Activated CD8-positive, alpha-beta T cell treated with anti-CD3 and anti-CD28 coated beads for 36 hours (primary cell): ENCODE measurements at regions of chr22 and their contacts with region 1.

Region 1: GRCh38 chr22:39514373-39514973 is 5.9 kb upstream of the ATF4 start:
- DNase-seq: peak; percentile 75
- ATAC-seq: no peak
- H3K4me3 Mint-ChIP-seq: no peak overlapping the region
- H3K27ac Mint-ChIP-seq: peak overlapping the region; percentile 19
- H3K4me1 Mint-ChIP-seq: peaks cover 39% of the 10 kb centered on the region
- H3K27me3 Mint-ChIP-seq: no peaks in the 10 kb centered on the region
- CTCF ChIP-seq: peak; percentile 72

Region 2: DNA sequence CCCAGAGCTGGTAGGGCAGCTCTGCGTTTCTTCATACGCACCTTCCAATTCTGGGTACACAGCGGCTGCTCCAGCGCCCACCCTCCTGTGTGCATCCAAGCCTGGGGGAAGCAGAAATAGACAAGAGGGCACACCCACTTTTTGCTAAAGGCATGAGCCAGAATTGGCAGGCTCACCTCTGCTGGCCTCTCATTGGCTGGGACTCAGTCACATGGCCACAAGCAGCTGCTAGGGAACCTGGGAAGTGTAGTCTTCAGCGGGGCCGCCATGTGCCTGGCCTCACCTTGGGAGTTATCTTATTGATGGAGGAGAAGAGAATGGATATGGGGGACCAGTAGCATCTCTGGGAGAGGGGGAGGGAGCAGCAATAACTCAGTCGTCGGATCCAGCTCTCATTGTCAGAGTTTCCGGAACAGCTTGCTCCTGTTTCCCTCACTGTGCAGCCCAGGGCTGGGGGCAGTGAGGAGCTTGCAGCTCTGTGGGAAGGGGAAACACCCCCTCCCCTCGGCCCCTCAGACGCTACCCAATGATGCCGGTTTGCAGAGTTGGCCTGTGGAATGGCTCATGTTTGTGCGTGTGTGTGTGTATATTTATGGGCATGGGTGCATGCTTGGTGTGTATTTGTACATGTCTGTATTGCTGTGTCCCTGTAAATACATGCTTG is 24.2 kb before region 1 on chr22:
- CTCF ChIA-PET with region 1: interaction called, 24 read pairs
- POLR2A ChIA-PET with region 1: interaction called, 28 read pairs
- intact Hi-C with region 1: no loop called
- DNase-seq: peak; percentile 92
- ATAC-seq: peak; percentile 99
- H3K4me3 Mint-ChIP-seq: peak overlapping the region; percentile 4
- H3K27ac Mint-ChIP-seq: no peak overlapping the region
- H3K4me1 Mint-ChIP-seq: peaks cover 12% of the 10 kb centered on the region
- H3K27me3 Mint-ChIP-seq: no peaks in the 10 kb centered on the region
- CTCF ChIP-seq: no peak